ENCODE measurements at regions of chrX and their contacts with region 1.

Region 1: DNA sequence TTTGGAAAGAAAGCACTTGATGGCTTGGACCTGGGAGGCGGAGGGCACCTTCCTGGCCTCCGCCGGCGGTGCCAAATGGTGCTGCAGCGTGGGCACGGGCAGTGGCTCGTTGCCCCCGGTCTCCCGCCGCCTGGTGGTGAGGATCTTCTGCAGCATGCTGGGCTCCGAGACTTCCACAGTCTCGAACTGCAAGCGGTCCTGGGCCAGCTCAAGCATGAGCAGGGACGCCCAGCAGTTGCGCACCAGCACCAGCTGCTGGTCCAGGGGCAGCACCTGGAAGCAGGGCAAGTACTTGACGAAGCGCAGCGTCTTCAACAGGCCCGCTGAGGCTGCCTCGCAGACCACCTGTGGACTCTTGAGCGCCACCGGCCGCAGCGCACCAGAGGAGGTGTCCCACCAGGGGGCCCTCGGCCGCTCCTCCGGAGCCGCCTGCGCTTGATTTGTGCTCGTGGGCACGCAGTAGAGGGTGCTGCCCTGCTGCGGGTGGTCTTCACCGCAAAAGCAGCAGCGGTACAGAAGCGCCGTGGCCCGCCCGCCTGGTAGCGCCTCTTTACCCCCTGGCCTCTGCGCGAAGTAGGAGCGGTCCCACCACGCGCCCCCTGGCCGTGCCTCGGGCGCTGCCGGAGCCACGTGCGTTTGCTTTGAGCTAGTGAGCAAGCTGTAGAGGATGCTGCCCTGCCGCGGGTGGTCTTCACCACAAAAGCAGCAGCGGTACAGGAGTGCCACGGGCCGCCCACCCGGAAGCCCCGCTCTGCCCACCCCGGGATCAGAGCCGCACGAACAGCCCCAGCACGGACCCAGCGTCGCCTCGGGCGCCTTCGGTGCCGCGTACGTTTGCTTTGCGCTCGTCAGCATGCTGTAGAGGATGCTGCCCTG is 689 bp downstream of the NR0B1 start:
- DNase-seq: peak in 1 of 2 experiments; percentile 66
- H3K4me3 ChIP-seq: no peak overlapping the region
- H3K27ac ChIP-seq: no peak overlapping the region
- H3K4me1 ChIP-seq: no peaks in the 10 kb centered on the region
- H3K27me3 ChIP-seq: no peaks in the 10 kb centered on the region
- CTCF ChIP-seq: no peak

Region 2: DNA sequence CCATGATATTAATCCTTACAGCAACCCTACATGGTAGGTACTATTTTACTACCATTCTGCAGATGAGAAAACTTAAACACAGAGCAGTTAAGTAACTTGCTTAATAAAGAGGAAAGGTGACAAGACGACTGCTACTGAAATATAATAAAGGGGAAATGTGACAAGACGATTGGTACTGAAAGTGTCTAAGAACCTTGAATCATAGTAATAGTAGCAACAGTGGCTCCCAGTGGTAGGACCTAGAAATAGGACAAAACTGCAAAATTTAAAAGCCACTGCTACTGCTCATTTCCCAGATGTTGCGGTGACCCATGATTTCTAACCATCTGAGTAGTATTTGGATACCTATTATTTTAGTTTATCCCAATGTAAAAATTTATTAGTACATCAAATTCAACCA is 179.6 kb after region 1 on chrX:
- CTCF ChIA-PET with region 1: no interaction called
- POLR2A ChIA-PET with region 1: no interaction called
- intact Hi-C with region 1: loop called (anchors 10 kb)
- DNase-seq: no peak
- H3K4me3 ChIP-seq: no peak overlapping the region
- H3K27ac ChIP-seq: no peak overlapping the region
- H3K4me1 ChIP-seq: no peaks in the 10 kb centered on the region
- H3K27me3 ChIP-seq: no peaks in the 10 kb centered on the region
- CTCF ChIP-seq: no peak